Activated T-helper 1 cell treated with anti-CD3 and anti-CD28 coated beads, Interleukin-12 subunit alpha, Interleukin-12 subunit beta, Interleukin-2, Interleukin-4 antibody, amounts not matched to agents 30 ng/mL and 10 ng/mL and 1 ng/mL, durations not matched to agents 14 hours and 24 hours and 36 hours (primary cell): ENCODE measurements at regions of chr15 and their contacts with region 1.

Region 1: DNA sequence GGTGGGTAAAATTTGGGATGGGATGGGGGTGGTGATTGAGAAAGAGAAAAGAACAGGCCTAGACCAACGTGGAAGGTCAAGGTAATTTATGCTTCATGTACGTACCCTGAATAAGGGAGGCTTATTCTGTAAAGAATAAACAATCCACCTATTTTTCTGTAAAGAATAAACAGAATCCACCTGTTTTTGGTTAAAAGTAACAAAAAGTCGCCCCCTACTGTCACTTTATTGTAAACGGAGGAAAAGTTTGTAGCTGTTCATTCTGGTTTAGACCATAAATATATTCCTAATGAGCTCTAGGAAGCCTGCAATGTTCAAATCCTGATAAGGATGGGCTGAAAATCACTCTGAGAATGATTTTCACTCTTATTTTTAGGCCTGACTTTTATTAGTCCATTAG is 23.5 kb upstream of the SQOR start:
- DNase-seq: no peak
- H3K4me3 Mint-ChIP-seq: no peak overlapping the region
- H3K27ac Mint-ChIP-seq: no peak overlapping the region
- H3K4me1 Mint-ChIP-seq: peaks cover 10% of the 10 kb centered on the region
- H3K27me3 Mint-ChIP-seq: no peaks in the 10 kb centered on the region

Region 2: DNA sequence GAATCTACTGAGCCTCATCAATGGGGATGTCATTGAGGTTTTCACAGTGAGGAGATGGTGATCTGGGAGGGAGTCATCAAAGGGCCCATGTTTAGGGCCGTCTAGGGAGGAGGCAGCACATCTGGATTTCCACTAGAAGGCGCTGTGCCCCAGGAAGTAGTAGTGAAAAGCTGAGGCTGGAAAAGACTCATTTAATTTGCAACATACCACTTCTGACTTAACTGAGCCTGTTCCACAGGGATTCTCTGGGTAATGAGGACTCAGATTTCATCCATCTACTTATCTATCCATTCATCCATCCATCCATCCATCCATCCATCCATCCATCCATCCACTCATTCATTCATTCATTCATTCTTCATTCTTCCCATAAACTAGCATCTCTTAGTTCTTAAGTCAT is 406.1 kb before region 1 on chr15:
- intact Hi-C with region 1: loop called (anchors 1 kb)
- DNase-seq: peak; percentile 50
- H3K4me3 Mint-ChIP-seq: no peak overlapping the region
- H3K27ac Mint-ChIP-seq: peak overlapping the region; percentile 53
- H3K4me1 Mint-ChIP-seq: peaks cover 9% of the 10 kb centered on the region
- H3K27me3 Mint-ChIP-seq: peaks cover 18% of the 10 kb centered on the region

Region 3: GRCh38 chr15:45429974-45430792 is 181.1 kb before region 1 on chr15:
- intact Hi-C with region 1: loop called (anchors 1 kb)
- DNase-seq: peak; percentile 82
- H3K4me3 Mint-ChIP-seq: peak overlapping the region; percentile 75
- H3K27ac Mint-ChIP-seq: no peak overlapping the region
- H3K4me1 Mint-ChIP-seq: no peaks in the 10 kb centered on the region
- H3K27me3 Mint-ChIP-seq: peaks cover 34% of the 10 kb centered on the region

Region 4: GRCh38 chr15:45634442-45635190 is 23.3 kb after region 1 on chr15 and contains the start of gene SQOR:
- intact Hi-C with region 1: loop called (anchors 2 kb)
- DNase-seq: peak; percentile 67
- H3K4me3 Mint-ChIP-seq: peak within 1 kb of the TSS; percentile 99
- H3K27ac Mint-ChIP-seq: peak within 1 kb of the TSS; percentile 94
- H3K4me1 Mint-ChIP-seq: peaks cover 50% of the 10 kb centered on the region
- H3K27me3 Mint-ChIP-seq: peaks cover 16% of the 10 kb centered on the region
- total RNA-seq, gene SQOR: 96.0 and 100 TPM in 2 replicates